Activated CD4-positive, alpha-beta memory T cell treated with anti-CD3 and anti-CD28 coated beads for 36 hours (primary cell): ENCODE measurements at regions of chr2 and their contacts with region 1.

Region 1: DNA sequence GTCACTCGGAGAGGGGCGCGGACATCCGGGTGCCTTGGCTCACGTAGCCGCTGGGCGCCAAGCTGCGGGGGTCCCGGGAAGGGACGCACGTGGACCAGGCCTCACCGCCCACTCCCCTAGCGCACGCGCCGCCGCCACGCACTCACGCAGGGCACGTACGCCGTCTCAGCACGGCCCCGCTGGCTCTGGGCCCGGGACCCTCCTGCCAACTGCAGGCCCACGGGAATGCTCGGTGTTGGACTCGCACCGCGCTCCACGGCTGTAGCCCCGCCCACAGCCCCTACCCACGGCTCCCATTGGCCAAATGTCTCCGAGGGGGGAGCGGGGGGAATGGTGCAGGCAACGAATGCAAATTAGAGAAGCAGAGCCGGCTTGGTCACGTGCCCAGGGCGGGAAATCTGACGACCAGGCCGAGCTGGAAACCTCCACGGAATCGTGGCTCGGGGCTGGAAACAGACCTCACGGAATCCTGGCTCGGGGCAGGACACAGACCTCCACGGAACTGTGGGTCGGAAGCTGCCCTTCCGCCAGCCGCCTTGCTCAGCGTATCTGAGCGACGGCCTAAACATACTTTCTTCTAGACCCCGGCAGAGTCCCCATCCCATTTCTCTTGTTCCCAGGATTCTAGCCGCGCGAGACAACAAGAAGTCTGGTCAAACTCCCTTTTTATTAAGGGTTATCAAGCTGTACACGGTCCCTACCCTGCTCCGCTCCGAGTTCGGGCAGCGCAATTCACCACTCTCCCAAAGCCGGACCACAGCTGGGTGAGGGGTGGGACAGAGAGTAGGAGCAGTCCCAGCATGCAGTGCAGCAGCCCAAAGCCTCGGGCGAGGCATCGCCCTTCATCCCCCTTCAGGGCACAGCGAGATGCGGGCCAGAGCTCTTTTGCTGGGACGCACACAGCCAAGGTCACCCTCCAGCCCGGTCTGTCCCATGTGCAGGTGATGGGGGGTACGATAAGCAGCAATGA is at the start of gene ABCB6:
- DNase-seq: peak; percentile 92
- H3K4me3 Mint-ChIP-seq: peak within 1 kb of the TSS; percentile 80
- H3K27ac Mint-ChIP-seq: peak within 1 kb of the TSS; percentile 69
- H3K4me1 Mint-ChIP-seq: peaks cover 19% of the 10 kb centered on the region
- H3K27me3 Mint-ChIP-seq: no peaks in the 10 kb centered on the region
- total RNA-seq, gene ABCB6: 11.5 to 11.7 TPM

Region 2: GRCh38 chr2:219229305-219230058 is 10.5 kb after region 1 on chr2 and contains the starts of genes ANKZF1 and ATG9A:
- CTCF ChIA-PET with region 1: interaction called, 11 read pairs
- POLR2A ChIA-PET with region 1: interaction called, 33 read pairs
- intact Hi-C with region 1: loop called (anchors 1 kb)
- DNase-seq: peak; percentile 99
- H3K4me3 Mint-ChIP-seq: peak within 1 kb of the TSS; percentile 95
- H3K27ac Mint-ChIP-seq: peak within 1 kb of the TSS; percentile 99
- H3K4me1 Mint-ChIP-seq: peaks cover 50% of the 10 kb centered on the region
- H3K27me3 Mint-ChIP-seq: no peaks in the 10 kb centered on the region
- total RNA-seq, gene ANKZF1: 97.0 to 97.5 TPM
- total RNA-seq, gene ATG9A: 34.7 to 39.5 TPM

Region 3: GRCh38 chr2:219245148-219245898 is 26.3 kb after region 1 on chr2 and contains the starts of genes GLB1L and STK16:
- CTCF ChIA-PET with region 1: no interaction called
- POLR2A ChIA-PET with region 1: interaction called, 15 read pairs
- intact Hi-C with region 1: no loop called
- DNase-seq: peak; percentile 95
- H3K4me3 Mint-ChIP-seq: peak within 1 kb of the TSS; percentile 98
- H3K27ac Mint-ChIP-seq: peak within 1 kb of the TSS; percentile 98
- H3K4me1 Mint-ChIP-seq: peaks cover 61% of the 10 kb centered on the region
- H3K27me3 Mint-ChIP-seq: no peaks in the 10 kb centered on the region
- total RNA-seq, gene GLB1L: 4.8 to 4.9 TPM
- total RNA-seq, gene STK16: 37.1 to 37.8 TPM

Region 4: GRCh38 chr2:219253753-219254590 is 35.0 kb after region 1 on chr2 and contains the start of gene TUBA4A:
- CTCF ChIA-PET with region 1: no interaction called
- POLR2A ChIA-PET with region 1: interaction called, 15 read pairs
- intact Hi-C with region 1: loop called (anchors 1 kb)
- DNase-seq: peak; percentile 92
- H3K4me3 Mint-ChIP-seq: peak within 1 kb of the TSS; percentile 86
- H3K27ac Mint-ChIP-seq: peak within 1 kb of the TSS; percentile 97
- H3K4me1 Mint-ChIP-seq: peaks cover 49% of the 10 kb centered on the region
- H3K27me3 Mint-ChIP-seq: no peaks in the 10 kb centered on the region
- total RNA-seq, gene TUBA4A: 219 to 229 TPM